Activated T-helper 1 cell treated with anti-CD3 and anti-CD28 coated beads, Interleukin-12 subunit alpha, Interleukin-12 subunit beta, Interleukin-2, Interleukin-4 antibody, amounts not matched to agents 30 ng/mL and 10 ng/mL and 1 ng/mL, durations not matched to agents 14 hours and 24 hours and 36 hours (primary cell): ENCODE measurements at regions of chr12 and their contacts with region 1.

Region 1: GRCh38 chr12:6533923-6534694 is at the start of gene GAPDH:
- DNase-seq: peak; percentile 86
- H3K4me3 Mint-ChIP-seq: peak within 1 kb of the TSS; percentile 91
- H3K27ac Mint-ChIP-seq: peak within 1 kb of the TSS; percentile 99
- H3K4me1 Mint-ChIP-seq: peaks cover 58% of the 10 kb centered on the region
- H3K27me3 Mint-ChIP-seq: no peaks in the 10 kb centered on the region
- total RNA-seq, gene GAPDH: 4,315 and 4,318 TPM in 2 replicates

Region 2: DNA sequence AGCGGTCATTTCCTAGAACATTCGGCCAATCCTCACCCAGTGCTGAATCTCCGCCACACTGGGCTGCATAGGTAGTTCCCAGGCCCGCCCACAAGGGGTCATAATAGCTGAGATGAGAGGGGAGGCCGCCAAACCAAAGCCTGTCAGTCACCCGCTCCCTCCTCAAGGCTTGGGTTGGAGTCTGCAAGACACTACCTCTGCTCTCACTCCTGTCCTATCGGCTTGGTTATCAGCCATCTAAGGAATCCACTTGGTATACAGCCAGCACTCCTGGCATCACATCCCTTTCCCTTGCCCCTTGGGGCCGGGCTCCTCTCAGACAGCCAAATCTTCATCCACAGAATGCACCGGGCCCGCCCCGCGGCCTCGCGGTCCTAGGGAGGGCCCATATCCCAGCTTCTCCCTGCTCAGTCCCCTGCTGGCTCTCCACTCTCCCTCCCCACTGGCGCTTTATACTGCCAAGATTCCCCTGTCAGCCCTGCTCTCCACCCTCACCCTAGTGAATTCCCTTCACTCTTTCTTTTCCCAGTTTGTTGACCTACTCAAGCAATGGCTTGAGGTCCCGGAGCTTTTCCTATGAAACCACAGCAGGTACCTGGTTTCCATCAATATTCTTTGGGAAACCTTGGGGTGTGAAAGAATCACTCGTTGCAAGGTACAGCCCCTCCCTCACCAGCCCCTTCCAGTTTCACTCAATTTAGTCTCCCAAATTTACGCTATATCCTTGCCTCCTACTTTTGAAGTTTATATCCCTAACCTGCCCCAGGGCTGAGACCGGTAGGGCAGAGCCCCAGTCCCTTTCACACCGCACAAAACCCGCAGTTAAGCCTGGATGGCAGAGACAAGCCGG is 20.3 kb after region 1 on chr12:
- intact Hi-C with region 1: loop called (anchors 1 kb)
- DNase-seq: no peak
- H3K4me3 Mint-ChIP-seq: peak overlapping the region; percentile 88
- H3K27ac Mint-ChIP-seq: peak overlapping the region; percentile 61
- H3K4me1 Mint-ChIP-seq: peaks cover 36% of the 10 kb centered on the region
- H3K27me3 Mint-ChIP-seq: no peaks in the 10 kb centered on the region

Region 3: DNA sequence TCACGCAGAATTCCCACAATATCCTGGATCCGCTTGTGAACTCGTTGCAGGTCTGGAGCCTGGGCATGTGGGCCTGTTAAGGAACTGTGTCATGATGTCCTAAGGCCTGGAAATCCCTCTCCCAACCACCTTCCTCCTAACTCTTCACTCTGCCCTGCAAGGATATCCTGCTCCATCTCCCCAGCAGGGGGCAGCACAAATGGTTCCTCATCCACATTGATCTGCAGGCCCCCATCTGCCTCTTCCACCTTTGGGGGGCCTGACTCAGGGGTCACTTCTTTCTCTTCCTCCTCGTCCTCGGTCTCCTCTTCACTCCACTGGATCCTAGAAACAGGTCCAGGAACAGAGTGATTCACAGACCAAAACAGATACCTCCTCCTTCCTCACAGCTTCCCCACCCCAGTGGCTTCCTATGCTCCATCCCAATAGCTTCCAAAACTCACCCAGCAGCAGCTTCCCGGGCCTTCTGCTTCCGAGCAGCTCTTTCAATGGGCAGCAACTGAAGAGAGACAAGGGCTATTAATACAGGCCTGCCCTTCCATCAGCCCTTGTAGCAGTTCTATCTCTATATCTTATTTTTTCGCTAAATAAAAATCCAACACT is 29.4 kb after region 1 on chr12:
- intact Hi-C with region 1: loop called (anchors 1 kb)
- DNase-seq: peak; percentile 47
- H3K4me3 Mint-ChIP-seq: no peak overlapping the region
- H3K27ac Mint-ChIP-seq: peak overlapping the region; percentile 24
- H3K4me1 Mint-ChIP-seq: peaks cover 28% of the 10 kb centered on the region
- H3K27me3 Mint-ChIP-seq: no peaks in the 10 kb centered on the region

Region 4: GRCh38 chr12:6582196-6582595 is 48.1 kb after region 1 on chr12:
- intact Hi-C with region 1: no loop called
- DNase-seq: no peak
- H3K4me3 Mint-ChIP-seq: no peak overlapping the region
- H3K27ac Mint-ChIP-seq: no peak overlapping the region
- H3K4me1 Mint-ChIP-seq: peaks cover 5% of the 10 kb centered on the region
- H3K27me3 Mint-ChIP-seq: no peaks in the 10 kb centered on the region

Region 5: DNA sequence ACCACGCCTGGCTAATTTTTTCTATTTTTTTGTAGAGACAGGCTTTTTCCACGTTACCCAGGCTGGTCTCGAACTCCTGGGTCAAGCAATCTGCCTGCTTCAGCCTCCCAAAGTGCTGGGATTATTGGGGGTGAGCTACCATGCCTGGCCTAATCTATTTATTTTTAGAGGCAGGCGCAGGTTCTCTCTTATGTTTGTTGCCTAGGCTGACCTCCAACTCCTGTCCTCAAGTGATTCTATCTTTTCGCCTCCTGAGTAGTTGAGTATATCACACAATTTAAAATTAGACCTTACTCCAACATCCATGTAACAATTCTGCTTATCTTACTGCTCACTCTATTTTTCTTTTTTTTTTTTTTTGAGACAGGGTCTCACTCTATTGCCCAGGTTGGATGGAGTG is 119.9 kb after region 1 on chr12:
- intact Hi-C with region 1: no loop called
- DNase-seq: no peak
- H3K4me3 Mint-ChIP-seq: no peak overlapping the region
- H3K27ac Mint-ChIP-seq: no peak overlapping the region
- H3K4me1 Mint-ChIP-seq: no peaks in the 10 kb centered on the region
- H3K27me3 Mint-ChIP-seq: no peaks in the 10 kb centered on the region

Region 6: DNA sequence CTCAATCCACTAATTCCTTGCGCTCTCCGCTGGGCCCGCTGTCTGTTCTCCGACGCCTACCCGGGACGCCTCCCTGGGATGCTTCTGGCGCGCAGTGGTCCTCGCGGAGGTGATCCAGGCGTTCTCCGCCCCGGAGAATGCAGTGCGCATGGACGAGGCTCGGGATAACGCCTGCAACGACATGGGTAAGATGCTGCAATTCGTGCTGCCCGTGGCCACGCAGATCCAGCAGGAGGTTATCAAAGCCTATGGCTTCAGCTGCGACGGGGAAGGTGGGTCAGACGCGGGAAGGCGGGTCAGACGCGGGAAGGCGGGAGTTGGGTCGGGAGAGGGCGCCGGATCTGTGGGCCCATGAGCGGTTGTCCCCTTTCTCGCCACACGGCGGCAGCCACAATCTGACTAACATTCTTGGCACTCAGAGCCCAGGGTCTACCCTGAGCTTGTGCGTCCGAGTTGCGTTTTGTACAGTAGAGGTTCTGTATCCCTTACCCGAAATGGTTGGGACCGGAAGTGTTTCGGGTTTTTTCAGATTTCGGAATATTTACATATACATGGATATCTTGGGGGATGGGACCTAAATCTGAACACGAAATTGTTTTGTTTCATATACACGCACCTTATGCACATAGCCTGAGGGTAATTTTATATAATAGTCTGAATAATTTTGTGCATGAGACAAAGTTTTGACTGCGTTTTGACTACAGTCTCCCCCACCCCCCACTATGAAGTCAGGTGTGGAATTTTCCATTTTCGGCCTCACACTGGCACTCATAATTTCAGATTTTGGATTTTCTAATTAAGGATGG is 410.5 kb after region 1 on chr12:
- intact Hi-C with region 1: loop called (anchors 10 kb)
- DNase-seq: peak; percentile 84
- H3K4me3 Mint-ChIP-seq: peak overlapping the region; percentile 96
- H3K27ac Mint-ChIP-seq: peak overlapping the region; percentile 95
- H3K4me1 Mint-ChIP-seq: peaks cover 71% of the 10 kb centered on the region
- H3K27me3 Mint-ChIP-seq: no peaks in the 10 kb centered on the region